CD4-positive, alpha-beta memory T cell (primary cell): ENCODE measurements at regions of chr1 and their contacts with region 1.

Region 1: GRCh38 chr1:247210376-247211117 is 38.7 kb upstream of the ZNF124 start:
- DNase-seq: peak; percentile 91 to 93 (median 92)
- H3K4me3 ChIP-seq: peak overlapping the region; percentile 66 to 70
- H3K4me3 Mint-ChIP-seq: peak overlapping the region; percentile 94 to 97 (median 95)
- H3K27ac ChIP-seq: peak overlapping the region; percentile 76
- H3K27ac Mint-ChIP-seq: peak overlapping the region; percentile 95 to 97 (median 95)
- H3K4me1 ChIP-seq: peaks cover 70% of the 10 kb centered on the region
- H3K4me1 Mint-ChIP-seq: peaks cover 50 to 74% (median 64%) of the 10 kb centered on the region in 4 donors
- H3K27me3 ChIP-seq: no peaks in the 10 kb centered on the region
- H3K27me3 Mint-ChIP-seq: no peaks in the 10 kb centered on the region

Region 2: DNA sequence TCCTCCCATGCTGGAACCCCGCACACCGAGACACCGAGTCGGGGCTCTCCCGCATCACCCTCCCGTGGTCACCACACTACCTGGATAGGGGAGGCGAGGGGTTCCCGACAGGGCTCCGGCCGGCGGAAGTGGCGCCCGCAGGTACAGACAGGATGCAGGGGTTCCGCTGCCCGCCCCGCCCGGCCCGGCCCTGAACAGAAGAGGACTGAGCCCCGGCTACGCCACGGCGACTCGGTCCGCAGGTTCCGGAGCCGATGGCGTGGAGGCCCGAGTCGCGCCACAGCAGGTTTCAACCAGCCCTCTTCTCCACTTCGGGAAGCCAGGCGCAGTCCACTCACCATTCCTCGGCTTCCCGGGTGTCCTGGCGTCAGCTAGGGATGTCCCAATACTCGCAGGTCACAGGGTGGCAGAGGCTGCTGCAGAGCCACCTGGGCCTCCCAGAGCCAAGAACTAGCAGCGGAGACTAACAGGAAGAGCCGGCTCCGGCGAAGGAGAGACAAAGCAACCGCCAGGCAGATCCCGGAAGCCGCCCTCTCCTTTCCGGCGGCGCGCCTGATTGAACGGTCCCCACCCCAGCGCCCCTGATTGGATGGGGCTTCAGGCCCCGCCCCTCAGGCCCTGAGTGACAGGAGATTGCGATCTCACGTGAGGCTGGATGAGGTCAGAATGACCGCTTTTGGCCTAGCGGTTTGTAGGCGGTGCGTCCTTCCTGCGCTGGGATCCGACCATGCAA is 106.5 kb before region 1 on chr1 and contains the start of gene ZNF669:
- CTCF ChIA-PET with region 1: no interaction called
- POLR2A ChIA-PET with region 1: interaction called, 3 read pairs
- intact Hi-C with region 1: loop called (anchors 1 kb)
- DNase-seq: peak; percentile 87 to 92 (median 89)
- H3K4me3 ChIP-seq: peak within 1 kb of the TSS; percentile 59 to 87
- H3K4me3 Mint-ChIP-seq: peak within 1 kb of the TSS; percentile 88 to 93 (median 90)
- H3K27ac ChIP-seq: peak within 1 kb of the TSS; percentile 49
- H3K27ac Mint-ChIP-seq: peak within 1 kb of the TSS; percentile 75 to 90 (median 83)
- H3K4me1 ChIP-seq: peaks cover 13% of the 10 kb centered on the region
- H3K4me1 Mint-ChIP-seq: peaks cover 9 to 25% (median 17%) of the 10 kb centered on the region in 4 donors
- H3K27me3 ChIP-seq: no peaks in the 10 kb centered on the region
- H3K27me3 Mint-ChIP-seq: peaks cover 18 to 19% of the 10 kb centered on the region in 2 donors
- total RNA-seq, gene ZNF669: 12.0 to 14.7 TPM

Region 3: GRCh38 chr1:247172996-247173395 is 37.6 kb before region 1 on chr1:
- CTCF ChIA-PET with region 1: no interaction called
- POLR2A ChIA-PET with region 1: no interaction called
- intact Hi-C with region 1: loop called (anchors 2 kb)
- DNase-seq: no peak
- H3K4me3 ChIP-seq: no peak overlapping the region
- H3K4me3 Mint-ChIP-seq: peak overlapping the region in 3 of 8 donors; percentile 26 to 46 (median 35)
- H3K27ac ChIP-seq: no peak overlapping the region
- H3K27ac Mint-ChIP-seq: peak overlapping the region in 1 of 7 donors; percentile 60
- H3K4me1 ChIP-seq: no peaks in the 10 kb centered on the region
- H3K4me1 Mint-ChIP-seq: peaks cover 8 to 14% (median 12%) of the 10 kb centered on the region in 4 donors
- H3K27me3 ChIP-seq: no peaks in the 10 kb centered on the region
- H3K27me3 Mint-ChIP-seq: no peaks in the 10 kb centered on the region

Region 4: DNA sequence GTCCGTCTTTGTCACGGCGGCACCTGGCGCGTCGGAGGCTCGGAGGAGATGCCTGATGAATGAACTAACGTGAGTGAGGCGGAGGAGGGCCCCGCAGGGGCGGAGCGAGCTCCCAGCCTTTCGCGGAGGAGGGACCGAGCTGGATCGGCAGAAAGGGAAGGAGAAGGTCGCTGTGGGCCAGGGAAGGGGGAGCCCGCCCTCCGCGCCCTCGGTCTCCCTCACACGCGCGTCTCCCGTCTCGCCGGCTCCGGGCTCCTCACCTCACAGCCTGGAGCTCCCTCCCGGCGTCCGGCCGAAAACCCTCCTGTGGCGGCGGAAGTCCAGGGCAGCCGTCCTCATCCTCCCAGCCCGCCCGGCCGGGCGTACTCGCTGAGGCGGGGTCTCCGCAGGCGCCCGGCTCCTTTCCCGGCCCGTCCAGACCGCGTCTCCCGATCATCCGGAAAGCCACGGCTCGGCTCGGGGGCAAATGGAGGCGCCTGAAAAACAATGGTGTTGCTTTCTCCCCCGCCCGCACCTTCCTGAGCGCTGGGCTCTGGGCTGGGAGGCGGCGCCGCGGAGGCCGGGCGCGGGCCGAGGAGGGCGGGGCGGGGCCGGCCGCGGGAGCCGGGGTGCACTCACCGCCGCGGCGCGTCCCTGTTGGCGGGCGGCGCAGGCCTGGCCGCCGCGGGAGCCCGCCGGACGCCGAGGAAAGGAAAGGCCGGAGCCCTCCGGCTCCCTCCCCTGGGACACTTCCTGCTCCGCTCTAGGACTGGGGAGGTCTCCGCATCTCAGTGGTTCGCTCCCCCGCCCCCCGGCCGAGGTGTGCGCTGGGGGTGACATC is 120.8 kb after region 1 on chr1 and contains the start of gene ZNF496:
- CTCF ChIA-PET with region 1: no interaction called
- POLR2A ChIA-PET with region 1: interaction called, 7 read pairs
- intact Hi-C with region 1: loop called (anchors 1 kb)
- DNase-seq: peak; percentile 52 to 68 (median 59)
- H3K4me3 ChIP-seq: peak within 1 kb of the TSS; percentile 28 to 69
- H3K4me3 Mint-ChIP-seq: peak within 1 kb of the TSS; percentile 92 to 98 (median 93)
- H3K27ac ChIP-seq: peak within 1 kb of the TSS; percentile 31
- H3K27ac Mint-ChIP-seq: peak within 1 kb of the TSS; percentile 29 to 93 (median 64)
- H3K4me1 ChIP-seq: peaks cover 16% of the 10 kb centered on the region
- H3K4me1 Mint-ChIP-seq: peaks cover 1 to 19% (median 13%) of the 10 kb centered on the region in 4 donors
- H3K27me3 ChIP-seq: no peaks in the 10 kb centered on the region
- H3K27me3 Mint-ChIP-seq: no peaks in the 10 kb centered on the region
- total RNA-seq, gene ZNF496: 11.3 to 12.4 TPM